Activated naive CD4-positive, alpha-beta T cell treated with anti-CD3 and anti-CD28 coated beads for 36 hours (primary cell): ENCODE measurements at regions of chr10 and their contacts with region 1.

Region 1: DNA sequence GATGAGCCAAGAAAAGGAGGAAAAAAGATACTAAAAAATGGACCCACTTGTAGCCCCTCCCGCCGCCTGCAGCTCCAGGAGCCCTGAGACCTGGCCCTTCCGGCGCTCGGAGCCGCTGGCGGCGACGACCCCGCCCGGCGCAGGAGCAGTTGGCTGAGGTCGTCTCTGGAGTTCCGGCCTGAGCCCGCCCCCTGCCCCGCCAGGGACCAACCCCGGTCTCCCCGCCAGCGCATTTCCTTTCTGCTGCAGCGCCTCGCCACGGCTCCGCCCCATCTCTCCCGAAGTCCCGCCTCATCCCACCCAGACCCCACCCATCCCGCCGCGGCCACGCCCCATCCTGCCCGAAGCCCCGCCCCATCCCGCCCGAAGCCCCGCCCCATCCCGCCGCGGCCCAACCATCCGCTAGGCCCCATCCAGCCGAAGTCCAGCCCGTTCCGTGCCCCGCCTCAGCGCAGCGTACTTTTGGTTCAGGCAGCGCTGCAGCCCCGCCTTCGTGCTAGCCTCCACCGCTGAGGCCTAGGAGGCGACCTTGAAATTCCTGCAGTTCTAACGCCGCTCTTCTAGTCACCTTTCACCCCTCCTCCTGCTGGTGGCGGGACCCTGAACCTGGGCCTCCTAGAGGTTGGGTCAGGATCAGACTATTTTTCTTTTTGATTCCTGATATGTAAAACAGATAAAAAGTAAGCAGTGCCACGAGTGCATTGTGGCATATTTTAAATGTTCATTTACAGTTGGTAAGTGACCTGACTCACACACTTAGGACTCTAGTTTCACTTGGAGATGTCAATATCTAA is at the start of gene STN1:
- DNase-seq: peak; percentile 98
- H3K4me3 Mint-ChIP-seq: peak within 1 kb of the TSS; percentile 89
- H3K27ac Mint-ChIP-seq: peak within 1 kb of the TSS; percentile 94
- H3K4me1 Mint-ChIP-seq: peaks cover 29% of the 10 kb centered on the region
- H3K27me3 Mint-ChIP-seq: no peaks in the 10 kb centered on the region
- total RNA-seq, gene STN1: 53.3 to 54.8 TPM

Region 2: DNA sequence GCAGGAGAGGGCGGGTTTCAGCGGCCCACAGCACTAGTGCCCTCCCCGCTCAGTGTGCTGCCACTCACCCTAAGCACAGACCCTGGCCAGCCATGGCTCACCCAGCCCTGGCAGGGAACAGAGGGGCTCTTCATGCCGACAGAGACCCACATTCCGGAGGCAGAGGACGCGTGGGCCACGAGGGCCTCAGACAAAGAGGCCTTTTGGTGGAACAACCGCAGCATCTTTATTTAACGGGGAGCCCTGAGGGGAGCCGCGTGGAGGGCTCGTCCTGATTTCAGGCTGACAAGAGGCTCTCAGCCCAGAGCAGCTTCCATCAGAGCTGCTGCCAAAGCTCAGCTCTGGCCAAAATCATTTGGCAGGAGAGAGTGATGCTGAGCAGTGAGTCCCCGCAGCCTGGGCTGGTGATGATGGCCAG is 190.7 kb before region 1 on chr10:
- CTCF ChIA-PET with region 1: no interaction called
- intact Hi-C with region 1: no loop called
- DNase-seq: no peak
- H3K4me3 Mint-ChIP-seq: no peak overlapping the region
- H3K27ac Mint-ChIP-seq: no peak overlapping the region
- H3K4me1 Mint-ChIP-seq: no peaks in the 10 kb centered on the region
- H3K27me3 Mint-ChIP-seq: no peaks in the 10 kb centered on the region

Region 3: DNA sequence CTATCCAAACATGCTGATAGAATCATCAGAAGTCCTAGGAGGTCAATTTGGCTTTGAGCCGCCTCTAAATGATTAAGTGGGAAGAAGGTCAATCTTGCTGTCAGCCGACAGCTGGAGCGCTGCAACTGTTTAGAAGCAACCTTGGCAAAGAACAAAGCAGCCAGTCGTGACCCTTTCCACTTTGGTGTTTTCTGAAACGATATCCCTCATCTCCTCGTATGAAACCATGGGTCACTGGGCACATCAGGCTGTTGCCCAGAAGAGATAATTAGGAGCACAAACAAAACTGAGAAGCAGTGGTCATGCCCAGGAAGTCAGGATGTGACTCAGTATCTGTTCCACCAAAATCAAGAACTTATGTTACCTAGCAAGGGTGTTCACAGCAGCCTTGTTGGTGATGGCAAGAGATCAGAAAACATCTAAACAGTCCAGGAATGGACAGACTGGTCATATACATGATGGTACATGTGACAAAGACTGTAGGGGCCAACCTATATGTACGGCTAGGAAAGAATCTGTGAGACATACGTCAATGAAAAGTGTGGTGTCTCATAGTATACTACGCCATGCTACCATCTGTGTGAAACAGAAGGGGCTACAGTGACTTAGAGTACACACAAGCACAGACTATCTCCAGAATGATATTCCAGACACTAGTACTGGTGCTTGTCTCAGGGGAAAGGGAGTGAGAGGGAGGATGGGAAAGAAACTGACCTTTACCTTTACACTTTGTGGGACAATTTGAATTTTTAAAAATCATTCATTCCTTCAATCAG is 22.7 kb before region 1 on chr10:
- CTCF ChIA-PET with region 1: no interaction called
- intact Hi-C with region 1: loop called (anchors 1 kb)
- DNase-seq: peak; percentile 32
- H3K4me3 Mint-ChIP-seq: no peak overlapping the region
- H3K27ac Mint-ChIP-seq: peak overlapping the region; percentile 84
- H3K4me1 Mint-ChIP-seq: peaks cover 37% of the 10 kb centered on the region
- H3K27me3 Mint-ChIP-seq: no peaks in the 10 kb centered on the region

Region 4: GRCh38 chr10:103901299-103901698 is 17.0 kb before region 1 on chr10:
- CTCF ChIA-PET with region 1: interaction called, 13 read pairs
- intact Hi-C with region 1: no loop called
- DNase-seq: peak; percentile 39
- H3K4me3 Mint-ChIP-seq: peak overlapping the region; percentile 17
- H3K27ac Mint-ChIP-seq: peak overlapping the region; percentile 4
- H3K4me1 Mint-ChIP-seq: peaks cover 47% of the 10 kb centered on the region
- H3K27me3 Mint-ChIP-seq: no peaks in the 10 kb centered on the region

Region 5: GRCh38 chr10:103966671-103967447 is 48.6 kb after region 1 on chr10 and contains the start of gene SLK:
- CTCF ChIA-PET with region 1: no interaction called
- intact Hi-C with region 1: loop called (anchors 1 kb)
- DNase-seq: peak; percentile 76
- H3K4me3 Mint-ChIP-seq: peak within 1 kb of the TSS; percentile 99
- H3K27ac Mint-ChIP-seq: peak within 1 kb of the TSS; percentile 92
- H3K4me1 Mint-ChIP-seq: peaks cover 26% of the 10 kb centered on the region
- H3K27me3 Mint-ChIP-seq: no peaks in the 10 kb centered on the region
- total RNA-seq, gene SLK: 16.0 to 16.1 TPM

Region 6: DNA sequence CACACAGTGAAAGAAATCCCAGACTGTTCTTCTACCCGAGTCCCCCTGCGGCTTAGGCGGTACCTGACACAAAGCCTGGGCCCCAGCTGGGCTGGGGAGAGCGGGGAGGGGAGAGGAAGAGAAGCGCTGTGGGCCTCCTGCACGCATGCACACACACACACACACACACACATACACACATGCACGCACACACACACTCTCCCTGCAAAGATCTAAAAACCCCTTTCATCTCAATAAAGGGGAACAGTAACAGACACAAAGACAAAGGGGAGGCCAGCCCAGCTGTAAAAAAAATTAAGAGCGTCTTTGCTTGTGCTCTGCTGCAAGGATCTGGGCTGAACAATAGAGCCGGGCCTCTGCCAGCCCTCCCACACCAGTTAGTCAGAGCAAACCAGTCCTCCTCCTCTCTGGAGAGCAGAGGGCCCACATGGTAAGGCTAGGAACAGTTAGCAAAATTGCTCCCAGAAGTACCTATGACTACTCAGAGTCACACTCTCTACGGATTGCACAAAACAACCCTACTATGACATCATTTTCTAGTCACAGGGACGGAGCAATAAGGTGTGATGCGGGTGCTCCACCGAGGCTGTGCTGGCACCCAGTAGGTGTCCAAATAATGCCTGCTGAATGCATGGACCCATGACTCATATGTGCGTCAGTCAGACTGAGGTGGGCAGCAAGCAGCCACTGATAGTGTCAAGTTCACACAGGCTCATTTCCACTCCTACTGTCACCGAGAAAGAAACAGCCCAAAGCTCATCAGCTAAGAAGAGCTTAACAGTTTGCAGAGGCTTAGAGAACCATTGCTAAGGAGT is 410.9 kb after region 1 on chr10:
- CTCF ChIA-PET with region 1: no interaction called
- intact Hi-C with region 1: loop called (anchors 1 kb)
- DNase-seq: peak; percentile 94
- H3K4me3 Mint-ChIP-seq: peak overlapping the region; percentile 72
- H3K27ac Mint-ChIP-seq: peak overlapping the region; percentile 96
- H3K4me1 Mint-ChIP-seq: peaks cover 98% of the 10 kb centered on the region
- H3K27me3 Mint-ChIP-seq: no peaks in the 10 kb centered on the region

Region 7: DNA sequence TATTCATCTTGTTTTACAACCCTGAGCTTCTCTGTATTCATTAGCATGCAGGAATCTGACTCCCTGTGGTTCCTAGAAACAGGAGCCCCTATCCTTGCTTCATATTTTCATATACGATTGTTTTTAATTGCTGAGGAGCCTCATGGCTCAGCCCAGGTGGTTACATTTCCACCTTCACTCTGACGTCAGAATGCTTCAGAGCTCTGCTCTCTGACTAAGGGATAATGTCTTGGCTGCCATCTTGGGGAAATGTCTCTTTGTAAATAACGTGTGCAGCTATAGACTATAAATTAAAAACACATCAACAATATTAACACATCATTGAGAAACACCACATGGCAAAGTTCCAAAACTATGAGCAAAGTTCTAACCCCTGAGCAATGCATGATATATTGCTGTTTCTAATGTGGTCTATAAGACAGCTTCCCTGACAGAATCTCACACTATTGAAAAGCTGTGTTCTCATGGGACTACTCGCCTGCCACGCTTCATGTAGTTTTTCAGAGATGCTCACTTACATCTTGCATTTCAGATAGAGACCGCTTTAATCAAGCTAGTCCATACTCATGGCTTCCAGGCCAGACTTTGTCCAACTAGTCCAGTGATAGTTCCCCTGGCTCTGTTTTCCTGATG is 949.8 kb after region 1 on chr10:
- CTCF ChIA-PET with region 1: no interaction called
- intact Hi-C with region 1: no loop called
- DNase-seq: no peak
- H3K4me3 Mint-ChIP-seq: no peak overlapping the region
- H3K27ac Mint-ChIP-seq: no peak overlapping the region
- H3K4me1 Mint-ChIP-seq: no peaks in the 10 kb centered on the region
- H3K27me3 Mint-ChIP-seq: no peaks in the 10 kb centered on the region